H1 (cell line): ENCODE measurements at regions of chr20 and their contacts with region 1.

Region 1: GRCh38 chr20:45946149-45946970 is 11.9 kb downstream of the PCIF1 start:
- DNase-seq: no peak
- H3K4me3 ChIP-seq: no peak overlapping the region
- H3K27ac ChIP-seq: no peak overlapping the region
- H3K4me1 ChIP-seq: no peaks in the 10 kb centered on the region
- H3K27me3 ChIP-seq: no peaks in the 10 kb centered on the region; a peak in 1 of 7 replicates
- CTCF ChIP-seq: no peak
- EP300 ChIP-seq: no peak
- POLR2A ChIP-seq: no peak
- RAD21 ChIP-seq: no peak

Region 2: DNA sequence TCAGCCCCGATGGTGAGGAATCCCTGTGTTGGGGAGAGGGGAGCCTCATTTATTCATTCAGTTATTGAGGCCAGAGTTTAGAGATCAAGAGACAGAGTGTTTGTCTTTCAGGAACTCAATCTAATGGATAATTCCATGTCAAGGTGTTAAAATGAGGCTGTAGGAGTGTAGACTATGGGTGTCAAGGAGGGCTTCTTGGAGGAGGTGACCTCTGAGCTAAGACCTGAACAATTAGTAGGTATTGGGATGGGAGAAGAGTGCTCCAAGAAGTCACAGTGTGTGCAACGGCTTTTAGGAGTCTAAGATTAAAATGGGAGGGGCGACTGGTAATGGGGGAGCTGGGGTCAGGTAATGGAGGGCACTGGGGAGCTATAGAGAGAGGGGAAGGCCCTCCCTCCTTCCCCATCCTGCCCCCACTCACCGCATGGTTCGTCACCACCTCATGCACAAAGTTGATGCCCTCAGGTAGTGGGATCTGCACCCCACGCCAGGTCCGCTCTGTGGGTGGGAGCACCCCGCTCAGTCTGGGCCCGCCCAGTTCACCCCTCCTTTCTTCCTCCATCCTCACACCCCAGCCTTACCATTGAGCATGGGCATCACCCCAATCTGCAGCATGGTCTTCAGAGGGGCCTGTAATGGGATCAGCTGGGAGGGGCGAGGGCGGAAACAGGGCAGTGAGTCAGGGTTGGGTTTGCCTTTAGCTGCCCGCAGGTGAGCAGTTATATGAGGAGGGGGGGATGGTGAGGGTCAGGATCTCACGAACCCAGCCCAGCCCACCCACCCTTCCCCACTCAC is 47.1 kb before region 1 on chr20:
- CTCF ChIA-PET with region 1: no interaction called
- POLR2A ChIA-PET with region 1: interaction called, 40 read pairs
- DNase-seq: no peak
- H3K4me3 ChIP-seq: no peak overlapping the region
- H3K27ac ChIP-seq: no peak overlapping the region
- H3K4me1 ChIP-seq: no peaks in the 10 kb centered on the region
- H3K27me3 ChIP-seq: no peaks in the 10 kb centered on the region
- CTCF ChIP-seq: no peak
- EP300 ChIP-seq: no peak
- POLR2A ChIP-seq: no peak
- RAD21 ChIP-seq: no peak

Region 3: DNA sequence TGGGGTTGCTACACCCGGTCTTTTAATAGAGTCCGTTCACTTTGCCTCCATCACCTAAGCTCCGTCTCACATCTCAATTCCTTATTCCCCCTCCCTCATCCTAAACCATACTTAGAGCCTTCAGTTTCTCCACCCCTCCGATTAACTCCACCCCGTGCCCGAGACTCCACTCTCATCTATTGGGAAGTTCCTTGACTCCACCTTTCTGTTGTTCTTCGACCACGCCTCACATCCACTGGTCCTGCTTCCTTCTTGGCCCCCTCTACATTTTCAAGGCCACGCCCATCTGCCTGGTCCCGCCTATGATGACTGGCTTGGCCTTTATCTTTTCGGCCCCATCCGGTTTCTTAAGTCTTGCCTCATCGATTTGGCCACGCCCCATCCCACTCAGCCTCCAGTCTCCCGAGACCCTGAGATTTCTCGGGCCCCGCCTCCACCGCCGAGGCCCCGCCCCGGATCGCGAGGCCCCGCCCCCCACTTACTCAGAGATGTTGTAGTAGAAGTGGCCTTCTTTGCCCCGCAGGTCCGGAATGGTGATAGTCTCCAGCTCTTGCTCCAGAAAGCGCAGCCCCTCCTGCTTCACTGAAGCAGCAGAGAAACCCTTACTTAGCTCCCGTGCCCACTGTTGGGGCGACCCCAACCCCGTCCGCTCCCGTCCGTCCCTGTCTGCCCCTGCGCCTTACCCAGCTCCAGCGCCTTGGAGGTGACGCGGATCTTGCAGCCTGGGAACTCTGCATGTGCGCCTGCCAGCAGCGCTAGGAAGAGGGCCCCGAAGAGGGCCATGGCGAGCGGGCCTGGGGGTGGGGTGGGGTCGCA is 35.5 kb before region 1 on chr20:
- CTCF ChIA-PET with region 1: no interaction called
- POLR2A ChIA-PET with region 1: interaction called, 43 read pairs
- DNase-seq: peak; percentile 99 to 100
- H3K4me3 ChIP-seq: peak overlapping the region; percentile 52 to 81 (median 70)
- H3K27ac ChIP-seq: peak overlapping the region; percentile 58; the same call in 1 of the 2 replicates
- H3K4me1 ChIP-seq: peaks cover 0 to 2% (median 0%) of the 10 kb centered on the region in 4 experiments; a peak in 3 of 7 replicates
- H3K27me3 ChIP-seq: no peaks in the 10 kb centered on the region
- CTCF ChIP-seq: no peak
- EP300 ChIP-seq: no peak
- POLR2A ChIP-seq: peak; percentile 59 to 68; a peak in 2 of 3 replicates
- RAD21 ChIP-seq: no peak

Region 4: GRCh38 chr20:45963059-45964005 is 17.0 kb after region 1 on chr20:
- CTCF ChIA-PET with region 1: interaction called, 82 read pairs
- POLR2A ChIA-PET with region 1: interaction called, 238 read pairs
- DNase-seq: no peak
- H3K4me3 ChIP-seq: no peak overlapping the region
- H3K27ac ChIP-seq: no peak overlapping the region
- H3K4me1 ChIP-seq: no peaks in the 10 kb centered on the region
- H3K27me3 ChIP-seq: no peaks in the 10 kb centered on the region
- CTCF ChIP-seq: peak in 2 of 3 experiments; percentile 37 to 47; a peak in 2 of 4 replicates
- EP300 ChIP-seq: no peak
- POLR2A ChIP-seq: no peak
- RAD21 ChIP-seq: peak; percentile 56 to 66